ENCODE measurements at regions of chr2 and their contacts with region 1.

Region 1: GRCh38 chr2:179226203-179226960 is 38.2 kb downstream of the SESTD1 start:
- DNase-seq: peak in 7 of 10 donors; percentile 10 to 87 (median 44)

Region 2: DNA sequence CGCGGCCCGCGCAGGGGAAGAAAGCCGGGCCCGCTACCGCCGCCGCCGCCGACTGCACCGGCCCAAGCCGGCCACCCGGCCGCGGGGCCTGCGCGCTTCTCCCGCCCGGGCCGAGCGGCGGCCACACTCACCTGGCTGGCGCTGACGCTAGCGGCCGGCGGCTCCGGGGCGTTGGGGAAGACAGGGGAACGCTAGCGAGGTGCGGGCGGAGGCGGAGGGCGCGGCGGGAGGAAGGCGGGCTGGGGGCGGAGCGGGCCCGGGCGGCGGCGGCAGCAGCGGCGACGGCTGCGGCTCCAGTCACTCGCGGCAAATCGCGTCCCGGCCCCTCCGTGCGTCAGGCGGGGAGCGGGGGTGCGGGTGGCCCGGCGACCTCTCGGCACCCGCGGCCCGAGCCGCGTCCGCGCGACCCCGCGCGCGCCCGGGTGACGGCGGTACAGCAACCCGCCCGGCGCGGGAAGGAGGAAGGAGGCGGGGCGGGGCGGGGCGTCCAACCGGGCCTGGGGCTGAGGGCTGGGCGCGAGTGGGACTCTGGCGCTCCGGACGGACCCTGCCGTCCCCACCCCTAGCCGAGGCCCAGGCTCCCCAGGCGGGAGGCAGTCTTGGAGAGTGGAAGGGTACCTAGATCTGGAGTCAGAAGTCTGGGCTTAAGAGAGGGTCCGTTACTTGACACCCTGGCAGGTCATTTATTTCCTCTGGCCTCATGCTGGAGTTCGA is 38.1 kb after region 1 on chr2 and contains the start of gene SESTD1:
- intact Hi-C with region 1: loop called (anchors 5 kb)
- DNase-seq: peak; percentile 52 to 96 (median 67)

Measured in posterior cingulate gyrus (tissue), 11 donors.